ENCODE measurements at regions of chr14 and their contacts with region 1.

Region 1: GRCh38 chr14:51219473-51220448 is 20.3 kb upstream of the TMX1 start:
- DNase-seq: peak; percentile 9
- H3K4me3 Mint-ChIP-seq: no peak overlapping the region
- H3K27ac Mint-ChIP-seq: no peak overlapping the region
- H3K4me1 Mint-ChIP-seq: no peaks in the 10 kb centered on the region
- H3K27me3 Mint-ChIP-seq: no peaks in the 10 kb centered on the region
- CTCF ChIP-seq: no peak

Region 2: DNA sequence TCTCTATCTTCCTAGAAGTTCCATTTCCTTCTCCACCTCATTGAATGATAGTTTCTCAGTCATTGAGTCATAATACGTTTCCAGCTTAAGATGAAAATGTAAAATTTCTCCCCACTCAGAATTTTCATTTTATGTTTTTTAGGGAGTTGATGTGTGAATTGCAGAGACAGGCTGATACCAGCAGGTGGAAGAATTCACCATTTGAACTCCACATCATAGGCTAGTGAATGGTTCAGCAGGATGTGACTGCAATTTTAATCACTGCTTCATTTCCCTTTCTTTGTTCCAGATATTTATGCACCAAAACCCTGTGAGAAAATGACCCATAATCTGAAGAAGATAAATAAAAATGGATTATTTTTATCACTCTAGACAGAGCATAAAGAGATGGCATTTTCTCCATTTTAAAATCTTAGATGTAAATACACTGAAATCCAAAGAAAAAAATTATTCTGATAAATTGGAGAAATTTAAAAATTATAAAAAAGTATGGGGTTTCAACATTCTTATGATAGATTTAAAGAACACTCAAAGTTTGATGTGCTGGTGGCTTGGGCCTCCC is 264.9 kb before region 1 on chr14:
- CTCF ChIA-PET with region 1: no interaction called
- intact Hi-C with region 1: loop called (anchors 1 kb)
- DNase-seq: no peak
- H3K4me3 Mint-ChIP-seq: no peak overlapping the region
- H3K27ac Mint-ChIP-seq: peak overlapping the region; percentile 81
- H3K4me1 Mint-ChIP-seq: peaks cover 19% of the 10 kb centered on the region
- H3K27me3 Mint-ChIP-seq: no peaks in the 10 kb centered on the region
- CTCF ChIP-seq: peak; percentile 45

Region 3: GRCh38 chr14:51087031-51087441 is 132.7 kb before region 1 on chr14:
- CTCF ChIA-PET with region 1: no interaction called
- intact Hi-C with region 1: no loop called
- DNase-seq: peak; percentile 85
- H3K4me3 Mint-ChIP-seq: peak overlapping the region; percentile 2
- H3K27ac Mint-ChIP-seq: peak overlapping the region; percentile 48
- H3K4me1 Mint-ChIP-seq: peaks cover 17% of the 10 kb centered on the region
- H3K27me3 Mint-ChIP-seq: no peaks in the 10 kb centered on the region
- CTCF ChIP-seq: no peak

Region 4: DNA sequence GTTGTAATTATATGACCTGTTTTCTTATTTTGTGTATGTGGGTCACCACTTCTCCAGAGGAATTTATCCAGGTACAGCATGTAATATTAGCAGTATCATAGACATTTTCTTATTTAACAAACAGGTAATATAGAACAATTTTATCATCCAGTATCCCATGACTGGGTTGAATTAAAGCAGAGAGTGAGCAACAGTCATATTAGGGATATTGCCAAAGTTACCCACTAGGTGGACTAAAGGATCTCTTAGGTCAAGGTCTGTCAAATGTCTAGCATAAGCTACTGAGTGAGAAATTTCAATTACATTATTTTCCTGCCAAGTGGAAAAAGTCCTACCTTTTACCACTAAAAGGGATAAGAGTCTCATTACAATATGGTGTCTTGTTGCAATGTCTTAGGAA is 62.7 kb before region 1 on chr14:
- CTCF ChIA-PET with region 1: no interaction called
- intact Hi-C with region 1: loop called (anchors 1 kb)
- DNase-seq: no peak
- H3K4me3 Mint-ChIP-seq: no peak overlapping the region
- H3K27ac Mint-ChIP-seq: no peak overlapping the region
- H3K4me1 Mint-ChIP-seq: no peaks in the 10 kb centered on the region
- H3K27me3 Mint-ChIP-seq: no peaks in the 10 kb centered on the region
- CTCF ChIP-seq: peak; percentile 28